H1 (cell line): ENCODE measurements at regions of chr13 and their contacts with region 1.

Region 1: DNA sequence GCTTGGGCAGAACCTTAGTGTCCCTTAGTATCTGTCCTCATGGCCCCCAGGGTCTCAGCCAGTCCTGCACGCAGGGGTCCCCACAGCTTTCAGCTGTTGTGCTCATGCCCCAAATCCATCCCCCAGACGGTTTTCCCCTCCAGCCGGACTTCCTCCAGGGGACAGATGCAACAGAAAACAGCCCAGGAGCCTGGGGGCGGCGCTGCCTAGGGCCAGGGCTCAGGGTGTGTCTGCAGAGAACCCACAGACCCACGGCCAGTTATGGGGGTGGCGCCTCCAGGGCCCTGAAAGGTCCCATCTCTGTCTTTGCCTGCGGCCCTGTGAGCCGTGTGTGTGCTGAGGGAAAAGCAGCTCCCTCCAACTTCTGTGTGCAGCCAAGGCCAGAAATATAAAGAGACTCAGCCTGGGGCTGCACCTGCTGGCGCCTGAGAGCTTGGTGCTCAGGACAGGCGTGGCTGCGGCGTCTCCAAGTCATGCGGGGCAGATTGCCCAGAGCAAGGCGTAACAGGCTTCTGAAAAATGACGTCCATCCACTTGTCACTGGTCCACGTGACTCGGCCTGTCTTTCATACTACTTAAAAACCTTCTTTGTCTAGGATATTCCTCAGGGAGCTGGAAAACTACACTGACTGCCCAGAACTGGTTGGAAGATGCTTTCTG is 22.1 kb upstream of the F7 start:
- DNase-seq: no peak
- H3K4me3 ChIP-seq: no peak overlapping the region
- H3K27ac ChIP-seq: no peak overlapping the region
- H3K4me1 ChIP-seq: no peaks in the 10 kb centered on the region
- H3K27me3 ChIP-seq: no peaks in the 10 kb centered on the region
- CTCF ChIP-seq: no peak
- EP300 ChIP-seq: no peak
- POLR2A ChIP-seq: no peak
- RAD21 ChIP-seq: no peak

Region 2: DNA sequence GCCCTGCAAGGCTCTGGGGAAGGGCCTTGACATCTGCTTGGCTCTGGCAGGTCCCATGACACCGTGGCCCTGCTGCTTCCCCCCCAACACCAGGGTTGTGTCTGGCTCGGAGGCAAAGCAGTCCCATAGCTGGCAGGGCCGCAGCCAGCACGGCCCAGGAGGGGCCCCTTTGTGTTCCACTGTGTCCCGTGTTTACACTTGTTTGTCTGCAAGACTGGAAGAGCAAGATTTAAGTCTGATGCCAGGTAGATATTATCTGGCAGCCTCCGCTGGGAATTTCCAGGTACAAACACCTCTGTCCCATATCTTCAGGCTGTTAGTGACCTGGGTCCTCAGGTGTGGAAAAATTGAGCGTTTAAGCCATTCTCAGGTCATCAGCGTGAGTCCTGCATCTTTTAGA is 70.2 kb before region 1 on chr13:
- CTCF ChIA-PET with region 1: no interaction called
- POLR2A ChIA-PET with region 1: no interaction called
- DNase-seq: no peak
- H3K4me3 ChIP-seq: no peak overlapping the region
- H3K27ac ChIP-seq: no peak overlapping the region
- H3K4me1 ChIP-seq: no peaks in the 10 kb centered on the region; a peak in 2 of 7 replicates
- H3K27me3 ChIP-seq: no peaks in the 10 kb centered on the region
- CTCF ChIP-seq: no peak
- EP300 ChIP-seq: no peak
- POLR2A ChIP-seq: no peak
- RAD21 ChIP-seq: no peak

Region 3: DNA sequence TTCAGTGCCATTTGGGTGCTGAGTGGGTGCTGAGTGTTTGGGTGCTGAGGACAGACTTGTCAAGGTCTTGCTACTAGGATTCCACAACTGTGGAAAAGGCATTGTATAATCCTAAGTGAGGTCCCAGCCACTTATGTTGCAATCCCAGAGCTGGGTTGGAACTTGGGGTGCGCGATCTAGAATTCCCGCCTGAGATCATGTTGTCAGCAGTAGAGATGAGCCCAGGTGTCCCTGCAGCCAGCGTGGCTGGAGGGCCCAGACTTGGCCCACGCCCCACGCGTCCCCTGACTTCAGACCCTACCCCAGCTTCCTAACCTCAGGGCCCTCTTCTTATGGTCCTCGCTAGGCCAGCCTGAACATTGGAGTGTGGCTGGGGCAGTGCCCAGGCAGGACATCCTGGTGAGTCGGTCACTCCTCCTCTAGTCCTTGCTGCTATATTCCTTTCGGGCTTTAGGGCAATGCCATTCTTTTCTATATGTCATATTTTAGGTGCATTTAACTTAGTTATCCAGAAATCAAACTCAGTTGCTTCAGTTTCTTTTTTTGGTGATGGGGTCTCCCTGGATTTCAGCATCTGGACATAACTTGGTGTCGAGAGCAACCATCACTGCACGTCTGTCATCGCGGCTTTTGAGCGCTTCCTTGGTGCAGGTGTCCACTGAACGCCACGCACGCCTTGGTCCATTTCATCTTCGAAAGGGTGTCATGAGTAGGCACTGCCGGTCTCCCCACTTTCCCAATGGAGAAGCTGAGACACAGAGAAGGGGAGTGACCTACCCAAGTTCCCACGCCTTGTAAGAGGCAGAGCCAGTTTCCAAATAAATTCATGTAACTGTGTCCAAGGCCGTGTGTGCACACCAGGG is 24.3 kb before region 1 on chr13:
- CTCF ChIA-PET with region 1: interaction called, 20 read pairs
- POLR2A ChIA-PET with region 1: no interaction called
- DNase-seq: no peak
- H3K4me3 ChIP-seq: no peak overlapping the region
- H3K27ac ChIP-seq: no peak overlapping the region
- H3K4me1 ChIP-seq: peaks cover 0 to 6% (median 2%) of the 10 kb centered on the region in 4 experiments; a peak in 2 of 7 replicates
- H3K27me3 ChIP-seq: no peaks in the 10 kb centered on the region
- CTCF ChIP-seq: no peak
- EP300 ChIP-seq: no peak
- POLR2A ChIP-seq: no peak
- RAD21 ChIP-seq: no peak

Region 4: DNA sequence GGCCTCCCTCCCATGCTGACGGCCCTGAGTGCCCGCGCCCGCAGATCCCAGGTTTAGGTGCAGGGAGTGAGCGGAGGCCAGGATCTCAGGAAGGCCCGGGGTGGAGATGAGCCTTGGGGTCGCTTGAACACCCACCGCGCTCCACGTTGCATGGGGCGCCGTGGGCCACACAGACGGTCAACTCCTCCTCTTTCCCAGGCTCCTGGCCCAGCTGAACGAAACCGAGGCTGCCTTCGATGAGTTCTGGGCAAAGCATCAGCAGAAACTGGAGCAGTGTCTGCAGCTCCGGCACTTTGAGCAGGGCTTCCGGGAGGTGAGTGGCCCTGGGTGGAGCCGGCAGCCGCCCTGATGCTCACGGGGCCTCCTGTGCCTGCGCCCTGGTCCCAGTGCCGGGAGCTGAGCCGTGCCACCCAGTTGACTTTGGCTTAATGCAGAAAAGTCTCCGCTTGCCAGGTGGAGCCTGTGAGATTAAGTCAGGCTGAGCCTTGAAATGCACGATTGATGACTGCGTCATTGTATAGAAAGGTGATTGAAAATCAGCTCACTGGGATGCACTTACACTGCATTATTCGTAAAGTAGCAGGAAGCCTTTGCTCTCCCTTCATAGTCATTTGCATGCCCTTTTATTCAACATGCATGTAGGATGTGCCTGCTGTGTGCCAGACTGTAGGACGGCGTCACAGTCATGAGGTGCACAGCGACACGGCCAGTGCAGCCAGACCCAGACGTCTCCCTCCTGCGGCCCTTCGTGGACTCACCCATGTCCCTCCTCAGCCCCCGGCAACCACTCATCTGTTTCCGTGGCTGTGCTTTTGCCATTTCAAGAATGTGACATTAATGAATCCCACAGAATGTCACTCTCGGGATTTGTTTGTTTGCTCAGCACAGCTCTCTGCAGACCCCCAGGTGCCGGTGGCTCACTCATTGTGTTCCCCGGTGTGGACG is 13.4 kb before region 1 on chr13:
- CTCF ChIA-PET with region 1: interaction called, 13 read pairs
- POLR2A ChIA-PET with region 1: interaction called, 3 read pairs
- DNase-seq: no peak
- H3K4me3 ChIP-seq: no peak overlapping the region
- H3K27ac ChIP-seq: no peak overlapping the region
- H3K4me1 ChIP-seq: peaks cover 0 to 6% (median 0%) of the 10 kb centered on the region in 4 experiments; a peak in 2 of 7 replicates
- H3K27me3 ChIP-seq: no peaks in the 10 kb centered on the region
- CTCF ChIP-seq: no peak
- EP300 ChIP-seq: no peak
- POLR2A ChIP-seq: no peak
- RAD21 ChIP-seq: no peak

Region 5: DNA sequence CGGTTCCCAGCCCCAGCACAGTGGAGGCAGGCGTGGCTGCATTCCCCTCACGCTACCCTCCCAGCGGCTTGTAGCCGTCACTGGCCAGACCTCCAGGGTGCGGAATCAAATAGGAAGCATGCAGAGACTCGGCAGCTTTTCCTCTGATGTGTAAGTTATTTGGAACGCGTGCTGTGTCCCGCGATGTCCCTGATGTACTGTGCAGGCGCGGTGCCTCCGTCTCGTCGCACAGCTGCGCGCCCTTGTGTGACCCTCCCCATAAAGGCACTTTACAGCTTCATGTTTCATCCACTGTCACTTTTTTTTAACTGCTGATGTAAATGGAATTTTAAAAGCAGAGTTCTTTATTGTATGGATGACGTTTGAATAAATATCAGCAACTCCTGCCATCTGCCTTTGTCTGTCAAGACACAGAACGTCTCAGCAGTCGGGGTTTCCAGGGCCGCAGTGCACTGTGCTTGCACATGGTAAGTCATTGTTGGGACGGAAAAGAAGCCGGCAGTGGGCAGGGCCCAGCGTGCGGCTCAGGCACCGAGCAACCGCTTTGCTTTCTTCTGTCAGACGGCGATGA is 14.7 kb after region 1 on chr13:
- CTCF ChIA-PET with region 1: interaction called, 30 read pairs
- POLR2A ChIA-PET with region 1: no interaction called
- DNase-seq: no peak
- H3K4me3 ChIP-seq: no peak overlapping the region
- H3K27ac ChIP-seq: no peak overlapping the region
- H3K4me1 ChIP-seq: no peaks in the 10 kb centered on the region; a peak in 1 of 7 replicates
- H3K27me3 ChIP-seq: no peaks in the 10 kb centered on the region
- CTCF ChIP-seq: no peak
- EP300 ChIP-seq: no peak
- POLR2A ChIP-seq: no peak
- RAD21 ChIP-seq: no peak

Region 6: DNA sequence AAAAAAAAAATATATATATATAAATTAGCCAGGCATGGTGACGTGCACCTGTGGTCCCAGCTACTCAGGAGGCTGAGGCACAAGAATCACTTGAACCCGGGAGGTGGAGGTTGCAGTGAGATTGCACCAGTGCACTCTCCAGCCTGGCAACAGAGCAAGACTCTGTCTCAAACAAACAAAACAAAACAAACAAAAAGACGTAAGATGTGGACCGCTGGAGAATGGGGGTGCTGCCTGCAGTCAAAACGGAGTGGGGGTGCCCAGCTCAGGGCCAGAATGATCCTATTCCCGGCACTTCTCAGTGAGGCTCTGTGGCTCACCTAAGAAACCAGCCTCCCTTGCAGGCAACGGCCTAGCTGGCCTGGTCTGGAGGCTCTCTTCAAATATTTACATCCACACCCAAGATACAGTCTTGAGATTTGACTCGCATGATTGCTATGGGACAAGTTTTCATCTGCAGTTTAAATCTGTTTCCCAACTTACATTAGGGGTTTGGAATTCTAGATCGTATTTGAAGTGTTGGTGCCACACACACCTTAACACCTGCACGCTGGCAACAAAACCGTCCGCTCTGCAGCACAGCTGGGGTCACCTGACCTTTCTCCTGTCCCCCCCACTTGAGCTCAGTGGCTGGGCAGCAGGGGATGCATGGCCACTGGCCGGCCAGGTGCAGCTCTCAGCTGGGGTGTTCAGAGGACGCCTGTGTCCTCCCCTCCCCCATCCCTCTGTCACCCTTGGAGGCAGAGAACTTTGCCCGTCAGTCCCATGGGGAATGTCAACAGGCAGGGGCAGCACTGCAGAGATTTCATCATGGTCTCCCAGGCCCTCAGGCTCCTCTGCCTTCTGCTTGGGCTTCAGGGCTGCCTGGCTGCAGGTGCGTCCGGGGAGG is 21.7 kb after region 1 on chr13 and contains the start of gene F7:
- CTCF ChIA-PET with region 1: interaction called, 14 read pairs
- POLR2A ChIA-PET with region 1: interaction called, 3 read pairs
- DNase-seq: no peak
- H3K4me3 ChIP-seq: no peak within 1 kb of the TSS
- H3K27ac ChIP-seq: no peak within 1 kb of the TSS
- H3K4me1 ChIP-seq: peaks cover 0 to 13% (median 6%) of the 10 kb centered on the region in 4 experiments; a peak in 6 of 7 replicates
- H3K27me3 ChIP-seq: peaks cover 12 to 14% (median 13%) of the 10 kb centered on the region in 4 experiments; a peak in 6 of 7 replicates
- CTCF ChIP-seq: no peak
- EP300 ChIP-seq: no peak
- POLR2A ChIP-seq: no peak
- RAD21 ChIP-seq: no peak
- total RNA-seq, gene F7: 0.43 and 0.67 TPM in 2 replicates

Region 7: DNA sequence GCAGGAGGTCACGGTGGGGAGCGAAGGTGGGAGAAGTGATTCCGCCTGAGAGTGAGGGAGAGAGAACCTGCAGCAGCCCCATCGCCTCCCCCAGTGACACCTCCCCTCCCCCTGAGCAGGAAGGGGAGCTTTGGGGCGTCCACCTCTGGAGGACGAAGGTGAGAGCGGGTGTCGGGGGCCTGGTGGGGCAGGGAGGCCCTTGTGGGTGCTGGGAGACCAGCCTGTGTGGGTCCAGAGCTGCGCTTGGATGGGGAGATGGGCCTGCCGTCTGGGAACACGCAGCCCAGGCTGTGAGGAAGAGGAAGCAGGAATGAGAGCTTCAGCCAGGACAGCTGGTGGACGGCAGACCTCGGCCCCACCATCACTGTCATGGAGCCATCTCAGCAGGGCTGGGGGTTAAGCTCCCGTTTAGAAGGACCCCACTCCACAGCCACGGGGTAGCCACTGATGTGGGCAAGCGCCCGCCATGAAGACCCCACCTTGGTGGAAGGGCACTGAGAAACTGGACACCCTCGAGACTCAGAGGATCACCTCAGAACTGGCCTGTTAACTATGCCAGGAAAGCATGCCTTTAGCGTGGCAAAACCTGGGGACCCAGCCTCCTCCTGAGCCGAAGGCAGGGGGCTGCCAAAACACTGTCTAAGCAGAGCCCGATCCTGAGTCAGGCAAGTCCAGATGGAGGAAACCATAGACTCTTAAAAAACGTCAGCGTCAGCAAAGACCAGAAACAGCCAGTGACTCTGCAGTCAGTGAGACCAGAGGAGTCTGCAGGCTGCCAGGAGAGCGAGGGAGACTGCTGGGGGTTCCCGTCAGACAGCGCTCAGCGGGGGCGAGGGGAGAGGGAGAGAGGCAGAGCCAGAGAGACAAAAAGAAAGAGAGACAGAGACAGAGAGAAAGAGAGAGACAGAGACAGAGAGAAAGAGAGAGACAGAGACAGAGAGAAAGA is 68.5 kb after region 1 on chr13:
- CTCF ChIA-PET with region 1: interaction called, 14 read pairs
- POLR2A ChIA-PET with region 1: interaction called, 3 read pairs
- DNase-seq: peak in 1 of 2 experiments; percentile 53
- H3K4me3 ChIP-seq: peak overlapping the region in 1 of 4 experiments; percentile 71; a peak in 2 of 8 replicates
- H3K27ac ChIP-seq: no peak overlapping the region
- H3K4me1 ChIP-seq: peaks cover 0 to 10% (median 4%) of the 10 kb centered on the region in 4 experiments; a peak in 4 of 7 replicates
- H3K27me3 ChIP-seq: peaks cover 7 to 22% (median 20%) of the 10 kb centered on the region in 4 experiments; a peak in 6 of 7 replicates
- CTCF ChIP-seq: no peak
- EP300 ChIP-seq: no peak
- POLR2A ChIP-seq: no peak
- RAD21 ChIP-seq: no peak

Region 8: DNA sequence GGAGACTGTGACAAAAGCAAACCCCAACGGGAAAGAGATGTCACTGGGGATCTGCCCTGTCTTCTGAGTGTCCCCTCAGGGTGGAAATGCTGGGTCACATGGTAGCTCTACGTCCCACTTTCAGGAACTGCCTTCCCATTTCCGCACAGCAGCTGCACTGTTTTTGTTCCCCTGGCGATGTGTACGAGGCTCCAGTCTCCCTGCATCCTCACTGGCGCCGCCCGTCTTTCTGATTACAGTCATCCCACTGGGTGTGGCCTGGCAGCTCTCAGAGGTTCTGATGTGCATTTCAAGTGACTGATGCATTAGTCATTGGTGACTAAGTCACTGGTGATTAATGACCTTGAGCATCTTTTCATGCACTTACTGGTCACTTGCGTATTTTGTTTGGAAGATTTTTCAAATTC is 103.7 kb after region 1 on chr13:
- CTCF ChIA-PET with region 1: no interaction called
- POLR2A ChIA-PET with region 1: no interaction called
- DNase-seq: no peak
- H3K4me3 ChIP-seq: no peak overlapping the region
- H3K27ac ChIP-seq: no peak overlapping the region
- H3K4me1 ChIP-seq: no peaks in the 10 kb centered on the region
- H3K27me3 ChIP-seq: no peaks in the 10 kb centered on the region
- CTCF ChIP-seq: no peak
- EP300 ChIP-seq: no peak
- POLR2A ChIP-seq: no peak
- RAD21 ChIP-seq: no peak

Region 9: GRCh38 chr13:113337556-113337955 is 254.0 kb after region 1 on chr13:
- CTCF ChIA-PET with region 1: no interaction called
- POLR2A ChIA-PET with region 1: no interaction called
- DNase-seq: peak; percentile 19 to 72
- H3K4me3 ChIP-seq: no peak overlapping the region
- H3K27ac ChIP-seq: no peak overlapping the region
- H3K4me1 ChIP-seq: peaks cover 0 to 5% (median 0%) of the 10 kb centered on the region in 4 experiments; a peak in 1 of 7 replicates
- H3K27me3 ChIP-seq: no peaks in the 10 kb centered on the region
- CTCF ChIP-seq: no peak
- EP300 ChIP-seq: no peak
- POLR2A ChIP-seq: no peak
- RAD21 ChIP-seq: no peak